ENCODE measurements at regions of chr4 and their contacts with region 1.

Region 1: DNA sequence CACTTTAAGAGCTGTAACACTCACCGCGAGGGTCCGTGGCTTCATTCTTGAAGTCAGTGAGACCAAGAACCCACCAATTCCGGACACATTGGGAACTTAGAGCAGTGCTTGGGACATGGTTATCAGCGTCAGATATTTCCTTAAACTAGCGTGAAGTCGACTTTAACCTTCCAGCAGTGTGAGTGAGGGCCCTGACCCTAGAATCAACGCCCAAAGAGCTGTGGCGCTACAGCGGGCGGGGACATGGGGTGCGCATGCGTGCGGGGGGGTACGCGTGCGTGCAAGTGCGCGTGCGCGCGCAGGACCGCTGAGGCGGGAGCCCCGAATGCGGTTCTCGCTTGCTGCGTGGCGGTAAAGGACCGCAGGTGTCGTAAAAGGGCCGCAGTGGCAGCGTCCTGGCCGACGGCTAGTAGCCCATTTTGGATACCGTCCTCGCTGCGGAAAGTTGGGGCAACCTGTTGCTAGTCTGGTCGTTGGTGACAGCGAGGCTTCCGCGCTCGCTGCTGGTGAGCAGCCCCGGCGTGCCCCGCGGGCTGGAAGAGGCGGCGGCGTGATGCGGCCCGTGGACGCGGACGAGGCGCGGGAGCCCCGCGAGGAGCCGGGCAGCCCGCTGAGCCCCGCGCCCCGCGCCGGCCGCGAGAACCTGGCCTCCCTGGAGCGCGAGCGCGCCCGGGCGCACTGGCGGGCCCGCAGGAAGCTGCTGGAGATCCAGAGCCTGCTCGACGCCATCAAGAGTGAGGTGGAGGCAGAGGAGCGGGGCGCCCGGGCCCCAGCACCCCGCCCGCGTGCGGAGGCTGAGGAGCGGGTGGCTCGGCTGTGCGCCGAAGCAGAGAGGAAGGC is 19.8 kb upstream of the S100P start:
- DNase-seq: peak; percentile 94
- H3K4me3 Mint-ChIP-seq: peak overlapping the region; percentile 98
- H3K27ac Mint-ChIP-seq: peak overlapping the region; percentile 98
- H3K4me1 Mint-ChIP-seq: peaks cover 48% of the 10 kb centered on the region
- H3K27me3 Mint-ChIP-seq: no peaks in the 10 kb centered on the region

Region 2: GRCh38 chr4:6640292-6641163 is 33.4 kb before region 1 on chr4 and contains the start of gene MRFAP1:
- CTCF ChIA-PET with region 1: interaction called, 8 read pairs
- POLR2A ChIA-PET with region 1: interaction called, 10 read pairs
- DNase-seq: peak; percentile 94
- H3K4me3 Mint-ChIP-seq: peak within 1 kb of the TSS; percentile 87
- H3K27ac Mint-ChIP-seq: peak within 1 kb of the TSS; percentile 98
- H3K4me1 Mint-ChIP-seq: peaks cover 29% of the 10 kb centered on the region
- H3K27me3 Mint-ChIP-seq: no peaks in the 10 kb centered on the region
- total RNA-seq, gene MRFAP1: 91.3 to 107 TPM

Region 3: GRCh38 chr4:6663596-6664393 is 10.1 kb before region 1 on chr4:
- CTCF ChIA-PET with region 1: interaction called, 11 read pairs
- POLR2A ChIA-PET with region 1: interaction called, 9 read pairs
- DNase-seq: no peak
- H3K4me3 Mint-ChIP-seq: peak overlapping the region; percentile 8
- H3K27ac Mint-ChIP-seq: no peak overlapping the region
- H3K4me1 Mint-ChIP-seq: peaks cover 4% of the 10 kb centered on the region
- H3K27me3 Mint-ChIP-seq: peaks cover 43% of the 10 kb centered on the region

Region 4: GRCh38 chr4:6688879-6689505 is 15.1 kb after region 1 on chr4:
- CTCF ChIA-PET with region 1: interaction called, 25 read pairs
- POLR2A ChIA-PET with region 1: interaction called, 4 read pairs
- DNase-seq: peak; percentile 83
- H3K4me3 Mint-ChIP-seq: peak overlapping the region; percentile 84
- H3K27ac Mint-ChIP-seq: peak overlapping the region; percentile 96
- H3K4me1 Mint-ChIP-seq: peaks cover 85% of the 10 kb centered on the region
- H3K27me3 Mint-ChIP-seq: no peaks in the 10 kb centered on the region

Region 5: DNA sequence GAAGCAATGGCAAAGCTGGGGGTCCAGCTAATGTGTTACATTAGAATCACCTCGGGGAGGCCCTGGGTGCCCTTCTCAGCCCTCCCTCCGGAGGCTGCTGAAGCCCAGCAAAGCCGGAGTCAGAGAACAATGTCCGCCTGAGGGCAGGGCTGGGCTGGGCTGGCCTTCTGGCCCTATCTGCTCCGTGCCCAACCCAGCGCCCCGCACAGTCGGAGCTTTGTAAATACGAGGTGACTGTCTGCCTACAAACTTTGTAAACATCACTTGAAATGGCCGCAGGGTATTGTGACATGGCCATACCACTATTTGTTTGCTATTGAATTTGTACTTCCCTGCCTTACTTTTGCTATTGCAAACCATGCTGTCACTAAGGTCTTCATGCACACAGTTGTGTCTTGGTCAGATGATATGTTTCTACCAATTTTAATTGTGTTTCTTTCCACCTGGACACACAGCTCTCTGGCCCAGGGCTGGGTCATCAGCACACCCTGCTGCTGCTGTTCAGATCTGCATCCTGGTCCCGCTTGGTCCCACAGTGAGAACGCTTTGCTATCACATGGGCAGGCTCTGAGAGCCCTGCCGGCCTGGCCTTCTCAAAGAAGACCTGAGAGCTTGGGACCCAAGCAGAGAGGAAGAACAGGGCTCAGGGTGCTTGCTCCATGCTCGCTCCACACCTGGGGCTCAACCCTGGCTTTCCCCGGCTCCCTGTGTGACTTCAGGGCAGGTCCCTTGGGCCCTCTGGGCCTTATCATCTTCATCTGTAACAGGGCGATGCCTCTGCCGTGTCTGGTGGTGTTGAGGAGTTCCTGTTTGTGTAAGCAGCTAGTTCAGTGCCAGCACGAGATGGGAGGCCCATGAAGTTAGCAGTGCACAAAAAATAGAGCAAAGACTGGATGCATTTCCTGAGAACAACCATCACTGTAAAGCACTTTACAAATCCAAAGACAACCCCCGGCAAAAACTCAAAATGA is 22.1 kb after region 1 on chr4:
- CTCF ChIA-PET with region 1: interaction called, 30 read pairs
- POLR2A ChIA-PET with region 1: interaction called, 3 read pairs
- DNase-seq: peak; percentile 82
- H3K4me3 Mint-ChIP-seq: peak overlapping the region; percentile 20
- H3K27ac Mint-ChIP-seq: peak overlapping the region; percentile 96
- H3K4me1 Mint-ChIP-seq: peaks cover 87% of the 10 kb centered on the region
- H3K27me3 Mint-ChIP-seq: no peaks in the 10 kb centered on the region

Region 6: DNA sequence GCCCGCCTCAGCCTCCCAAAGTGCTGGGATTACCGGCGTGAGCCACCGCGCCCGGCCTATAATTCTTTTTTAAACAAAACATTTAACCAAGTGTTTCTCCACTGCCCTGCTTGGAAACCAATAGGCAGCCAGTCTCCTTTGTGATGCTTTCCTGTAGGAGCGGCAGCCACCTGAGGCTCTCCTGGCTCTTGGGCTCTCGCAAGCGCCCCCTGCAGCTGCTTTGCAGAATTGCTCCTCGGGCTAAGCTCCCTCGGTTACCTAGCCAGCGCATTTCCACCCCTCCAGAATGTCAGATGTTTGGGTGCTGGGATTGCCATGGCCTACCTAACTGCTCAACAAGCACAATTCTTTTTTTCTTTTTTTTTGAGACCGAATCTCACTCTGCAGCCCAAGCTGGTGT is 27.5 kb after region 1 on chr4:
- CTCF ChIA-PET with region 1: interaction called, 30 read pairs
- POLR2A ChIA-PET with region 1: interaction called, 4 read pairs
- DNase-seq: peak; percentile 40
- H3K4me3 Mint-ChIP-seq: no peak overlapping the region
- H3K27ac Mint-ChIP-seq: peak overlapping the region; percentile 13
- H3K4me1 Mint-ChIP-seq: peaks cover 74% of the 10 kb centered on the region
- H3K27me3 Mint-ChIP-seq: no peaks in the 10 kb centered on the region